Adrenal gland (tissue), 19 donors: ENCODE measurements at regions of chr13 and their contacts with region 1.

Region 1: GRCh38 chr13:82323096-82323495 is 1559.2 kb downstream of the SLITRK1 start:
- DNase-seq: no peak
- H3K4me3 ChIP-seq: no peak overlapping the region
- H3K27ac ChIP-seq: no peak overlapping the region
- H3K4me1 ChIP-seq: no peaks in the 10 kb centered on the region
- H3K27me3 ChIP-seq: no peaks in the 10 kb centered on the region
- CTCF ChIP-seq: no peak
- POLR2A ChIP-seq: no peak

Region 2: DNA sequence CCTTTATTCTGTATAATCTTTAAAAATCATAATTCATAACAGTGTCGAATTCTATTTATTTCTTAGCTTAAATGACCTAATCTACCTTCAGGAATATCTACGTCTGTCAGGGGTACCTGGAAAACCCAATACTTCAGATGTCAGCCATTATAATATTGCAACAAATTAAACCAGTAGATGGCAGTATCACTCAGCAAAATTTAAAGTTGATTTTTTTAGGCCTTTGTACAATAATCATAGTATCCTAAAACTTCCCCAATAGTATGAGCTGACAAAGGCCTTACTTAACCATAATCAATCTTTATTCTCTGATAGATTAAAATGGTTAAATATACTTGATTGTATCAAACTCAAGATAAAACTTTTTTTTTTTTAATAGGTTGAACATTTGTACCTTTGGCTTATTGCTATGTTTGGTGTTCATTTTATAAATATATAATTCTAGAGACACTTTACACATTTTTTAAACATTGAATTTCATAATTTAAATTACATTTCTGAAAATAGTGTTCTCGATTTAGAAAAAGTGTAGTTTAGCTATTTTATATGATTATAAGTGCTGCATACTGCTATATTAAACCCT is 1151.9 kb before region 1 on chr13:
- intact Hi-C with region 1: loop called in 1 of 2 experiments (anchors 10 kb)
- DNase-seq: no peak
- H3K4me3 ChIP-seq: no peak overlapping the region
- H3K27ac ChIP-seq: no peak overlapping the region
- H3K4me1 ChIP-seq: no peaks in the 10 kb centered on the region
- H3K27me3 ChIP-seq: no peaks in the 10 kb centered on the region
- CTCF ChIP-seq: peak; percentile 26 to 65 (median 36)
- POLR2A ChIP-seq: no peak

Region 3: DNA sequence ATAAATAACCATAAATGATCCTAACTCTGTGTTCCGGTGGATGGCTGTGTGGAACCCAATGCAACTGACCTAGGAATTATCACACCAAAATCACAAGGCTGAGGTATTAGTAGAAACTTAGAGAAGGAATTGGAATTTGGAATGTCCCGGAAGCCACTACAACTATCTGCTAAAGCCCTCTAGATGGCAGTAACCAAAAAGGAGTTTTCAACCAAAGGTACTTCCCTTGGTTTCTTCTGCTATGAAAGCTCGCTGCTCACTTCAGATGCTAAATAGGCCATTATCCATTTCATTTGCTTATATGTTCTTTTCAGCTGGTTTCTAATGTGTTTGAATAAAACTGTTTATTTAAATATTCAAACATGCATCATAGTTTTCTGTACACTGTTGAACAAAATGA is 393.1 kb before region 1 on chr13:
- intact Hi-C with region 1: loop called in 1 of 2 experiments (anchors 10 kb)
- DNase-seq: no peak
- H3K4me3 ChIP-seq: no peak overlapping the region
- H3K27ac ChIP-seq: no peak overlapping the region
- H3K4me1 ChIP-seq: no peaks in the 10 kb centered on the region
- H3K27me3 ChIP-seq: no peaks in the 10 kb centered on the region
- CTCF ChIP-seq: peak in 4 of 6 experiments; percentile 18 to 39 (median 32)
- POLR2A ChIP-seq: no peak